ENCODE measurements at regions of chr2 and their contacts with region 1.

Region 1: DNA sequence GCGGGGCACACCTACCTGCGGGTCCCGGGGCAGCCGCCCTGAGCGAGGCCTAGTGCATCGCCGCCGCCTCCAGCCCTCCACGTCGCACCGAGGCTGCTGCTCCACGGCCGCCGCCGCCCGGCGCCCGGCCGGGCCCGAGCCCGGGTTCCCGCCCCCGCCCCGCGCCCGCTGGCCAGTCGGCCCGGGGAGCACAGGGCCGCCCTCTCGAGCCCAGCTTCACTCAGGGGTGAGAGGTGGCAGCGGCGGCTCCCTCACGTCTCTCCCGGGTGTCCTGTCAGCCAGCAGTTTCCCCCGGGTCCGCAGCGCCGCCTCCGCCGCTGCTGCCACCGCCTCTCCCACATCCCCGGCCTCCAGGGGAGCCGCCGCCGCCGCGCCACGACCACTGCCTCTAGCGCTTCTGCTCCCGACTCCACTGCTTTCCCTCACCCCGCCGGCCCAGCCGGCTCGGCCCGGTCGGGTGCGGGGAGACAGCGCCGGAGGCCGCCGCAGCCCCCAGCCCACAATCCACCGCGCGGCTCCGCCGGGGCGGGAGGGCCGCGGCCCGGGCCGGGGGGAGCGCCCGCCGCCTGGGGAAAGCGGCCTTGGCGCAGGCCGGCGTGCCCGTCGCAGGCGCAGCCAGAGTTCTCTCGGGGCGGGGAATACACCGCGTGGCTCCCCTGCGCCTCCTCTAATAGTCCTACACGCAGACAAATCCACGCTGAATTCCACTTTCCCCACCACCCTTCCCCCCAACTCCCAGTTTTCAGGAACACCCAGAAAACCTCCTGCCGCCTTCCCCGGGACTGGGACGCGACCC is at the start of gene VPS54:
- DNase-seq: peak; percentile 66
- ATAC-seq: peak; percentile 80
- H3K4me3 Mint-ChIP-seq: peak within 1 kb of the TSS; percentile 97
- H3K27ac Mint-ChIP-seq: peak within 1 kb of the TSS; percentile 92
- H3K4me1 Mint-ChIP-seq: peaks cover 34% of the 10 kb centered on the region
- H3K27me3 Mint-ChIP-seq: no peaks in the 10 kb centered on the region
- CTCF ChIP-seq: no peak
- total RNA-seq, gene VPS54: 11.5 and 13.1 TPM in 2 replicates

Region 2: GRCh38 chr2:63888490-63889402 is 130.4 kb before region 1 on chr2:
- CTCF ChIA-PET with region 1: no interaction called
- POLR2A ChIA-PET with region 1: no interaction called
- intact Hi-C with region 1: no loop called
- DNase-seq: no peak
- ATAC-seq: peak; percentile 69
- H3K4me3 Mint-ChIP-seq: no peak overlapping the region
- H3K27ac Mint-ChIP-seq: no peak overlapping the region
- H3K4me1 Mint-ChIP-seq: no peaks in the 10 kb centered on the region
- H3K27me3 Mint-ChIP-seq: no peaks in the 10 kb centered on the region
- CTCF ChIP-seq: no peak

Region 3: DNA sequence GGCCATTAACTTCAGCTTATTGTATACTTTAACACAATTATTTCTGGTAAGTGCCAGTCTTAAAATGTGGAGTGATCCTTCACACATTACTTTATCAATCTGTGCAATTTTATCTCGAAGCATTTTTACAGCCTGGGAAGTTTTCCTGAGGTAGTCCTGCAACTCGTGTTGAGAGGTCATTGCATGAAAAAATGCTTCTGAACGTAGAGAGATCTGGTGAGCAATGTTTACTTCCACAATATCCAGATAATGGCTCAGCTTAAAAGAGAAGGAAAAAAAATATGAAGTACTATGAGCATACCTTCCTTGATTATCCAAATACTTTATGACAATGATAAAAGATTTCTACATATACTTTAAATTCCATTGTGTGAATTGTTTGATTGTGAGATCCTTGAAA is 56.9 kb before region 1 on chr2:
- CTCF ChIA-PET with region 1: no interaction called
- POLR2A ChIA-PET with region 1: interaction called, 18 read pairs
- intact Hi-C with region 1: no loop called
- DNase-seq: no peak
- ATAC-seq: no peak
- H3K4me3 Mint-ChIP-seq: no peak overlapping the region
- H3K27ac Mint-ChIP-seq: no peak overlapping the region
- H3K4me1 Mint-ChIP-seq: no peaks in the 10 kb centered on the region
- H3K27me3 Mint-ChIP-seq: no peaks in the 10 kb centered on the region
- CTCF ChIP-seq: no peak

Region 4: DNA sequence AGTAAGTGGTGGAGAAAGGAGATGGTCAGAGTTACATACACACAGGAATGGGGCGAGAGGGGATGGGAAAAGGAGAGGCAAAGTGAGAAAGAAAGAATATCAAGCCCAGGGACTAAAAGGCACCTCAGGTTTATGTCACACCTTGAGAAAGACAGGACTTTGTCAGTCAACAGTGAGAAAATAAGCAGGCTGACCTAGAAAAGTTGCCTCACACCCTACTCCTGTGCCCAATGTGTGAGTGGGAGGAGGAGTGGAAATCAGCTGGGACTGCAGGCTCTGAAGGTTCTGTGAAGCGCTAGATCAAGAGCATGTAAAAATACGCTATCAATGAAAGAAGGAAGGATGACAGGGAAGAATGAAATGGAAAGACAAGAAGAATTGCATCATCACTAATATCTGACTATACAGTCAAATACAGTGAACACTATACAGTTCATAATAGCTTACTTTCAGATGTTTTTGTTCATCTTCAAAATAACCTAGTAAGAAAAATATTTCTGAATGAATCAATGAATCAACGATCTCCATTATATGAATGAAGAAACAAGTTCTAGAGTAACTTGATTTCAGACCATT is 10.6 kb before region 1 on chr2:
- CTCF ChIA-PET with region 1: no interaction called
- POLR2A ChIA-PET with region 1: no interaction called
- intact Hi-C with region 1: no loop called
- DNase-seq: no peak
- ATAC-seq: no peak
- H3K4me3 Mint-ChIP-seq: no peak overlapping the region
- H3K27ac Mint-ChIP-seq: no peak overlapping the region
- H3K4me1 Mint-ChIP-seq: peaks cover 8% of the 10 kb centered on the region
- H3K27me3 Mint-ChIP-seq: no peaks in the 10 kb centered on the region
- CTCF ChIP-seq: no peak

Region 5: GRCh38 chr2:64033920-64034319 is 14.8 kb after region 1 on chr2:
- CTCF ChIA-PET with region 1: interaction called, 3 read pairs
- POLR2A ChIA-PET with region 1: interaction called, 11 read pairs
- intact Hi-C with region 1: no loop called
- DNase-seq: no peak
- ATAC-seq: no peak
- H3K4me3 Mint-ChIP-seq: no peak overlapping the region
- H3K27ac Mint-ChIP-seq: no peak overlapping the region
- H3K4me1 Mint-ChIP-seq: peaks cover 11% of the 10 kb centered on the region
- H3K27me3 Mint-ChIP-seq: no peaks in the 10 kb centered on the region
- CTCF ChIP-seq: no peak

Measured in activated B cell treated with CpG ODN at 0.5 μM for 24 hours (primary cell).